B cell (primary cell): ENCODE measurements at regions of chr12 and their contacts with region 1.

Region 1: DNA sequence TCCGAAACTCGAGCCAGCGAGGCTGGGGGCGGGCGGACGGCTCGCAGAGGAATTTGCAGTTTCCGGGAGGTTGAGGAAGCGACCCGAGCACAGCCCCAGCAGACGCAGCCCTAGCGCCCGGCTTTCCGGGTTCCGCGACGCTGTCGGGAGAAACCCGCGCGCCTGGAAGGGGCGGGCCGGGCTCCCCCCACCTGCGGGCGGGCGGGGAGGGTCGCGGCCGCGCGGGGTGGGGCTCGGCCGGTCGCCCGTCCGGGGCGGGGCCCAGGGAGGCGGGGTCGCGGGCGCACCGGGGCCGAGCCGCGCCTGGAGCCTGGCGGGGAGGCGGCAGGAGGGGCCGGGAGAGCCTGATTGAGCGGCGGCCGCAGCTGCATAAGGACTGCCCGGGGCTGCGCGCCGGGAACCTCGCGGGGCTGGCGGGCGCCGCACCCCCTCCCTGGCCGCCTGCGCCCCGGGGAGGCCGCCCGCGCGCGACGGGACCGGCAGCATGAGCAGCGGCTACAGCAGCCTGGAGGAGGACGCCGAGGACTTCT is at the start of gene RASSF3:
- DNase-seq: peak; percentile 83
- ATAC-seq: peak; percentile 63
- H3K4me3 ChIP-seq: peak within 1 kb of the TSS; percentile 85 to 98 (median 94)
- H3K4me3 Mint-ChIP-seq: peak within 1 kb of the TSS; percentile 99
- H3K27ac ChIP-seq: peak within 1 kb of the TSS; percentile 83 to 89
- H3K27ac Mint-ChIP-seq: peak within 1 kb of the TSS; percentile 99
- H3K4me1 ChIP-seq: peaks cover 33 to 37% of the 10 kb centered on the region in 2 donors
- H3K4me1 Mint-ChIP-seq: peaks cover 39% of the 10 kb centered on the region
- H3K27me3 ChIP-seq: no peaks in the 10 kb centered on the region
- H3K27me3 Mint-ChIP-seq: no peaks in the 10 kb centered on the region
- CTCF ChIP-seq: no peak
- total RNA-seq, gene RASSF3: 104 and 107 TPM in 2 replicates

Region 2: GRCh38 chr12:64222009-64222765 is 388.0 kb before region 1 on chr12 and contains the start of gene KICS2:
- CTCF ChIA-PET with region 1: no interaction called
- POLR2A ChIA-PET with region 1: no interaction called
- intact Hi-C with region 1: loop called (anchors 5 kb)
- DNase-seq: peak; percentile 98
- ATAC-seq: peak; percentile 86
- H3K4me3 ChIP-seq: peak within 1 kb of the TSS; percentile 58 to 89 (median 80)
- H3K4me3 Mint-ChIP-seq: peak within 1 kb of the TSS; percentile 93
- H3K27ac ChIP-seq: peak within 1 kb of the TSS; percentile 92 to 97
- H3K27ac Mint-ChIP-seq: peak within 1 kb of the TSS; percentile 96
- H3K4me1 ChIP-seq: peaks cover 10 to 20% of the 10 kb centered on the region in 2 donors
- H3K4me1 Mint-ChIP-seq: peaks cover 31% of the 10 kb centered on the region
- H3K27me3 ChIP-seq: peaks cover 0 to 3% (median 0%) of the 10 kb centered on the region in 4 experiments
- H3K27me3 Mint-ChIP-seq: peaks cover 8% of the 10 kb centered on the region
- CTCF ChIP-seq: no peak
- total RNA-seq, gene KICS2: 18.7 and 21.2 TPM in 2 replicates

Region 3: GRCh38 chr12:64451687-64452558 is 158.3 kb before region 1 on chr12 and contains the start of gene TBK1:
- CTCF ChIA-PET with region 1: no interaction called
- POLR2A ChIA-PET with region 1: interaction called, 3 read pairs
- intact Hi-C with region 1: loop called (anchors 5 kb)
- DNase-seq: peak; percentile 82
- ATAC-seq: peak; percentile 79
- H3K4me3 ChIP-seq: peak within 1 kb of the TSS; percentile 66 to 97 (median 90)
- H3K4me3 Mint-ChIP-seq: peak within 1 kb of the TSS; percentile 96
- H3K27ac ChIP-seq: peak within 1 kb of the TSS; percentile 63 to 77
- H3K27ac Mint-ChIP-seq: peak within 1 kb of the TSS; percentile 92
- H3K4me1 ChIP-seq: peaks cover 5 to 12% of the 10 kb centered on the region in 2 donors
- H3K4me1 Mint-ChIP-seq: peaks cover 38% of the 10 kb centered on the region
- H3K27me3 ChIP-seq: no peaks in the 10 kb centered on the region
- H3K27me3 Mint-ChIP-seq: no peaks in the 10 kb centered on the region
- CTCF ChIP-seq: peak; percentile 38
- total RNA-seq, gene TBK1: 38.5 and 46.9 TPM in 2 replicates

Region 4: GRCh38 chr12:64625243-64626077 is 15.2 kb after region 1 on chr12:
- CTCF ChIA-PET with region 1: interaction called, 8 read pairs
- POLR2A ChIA-PET with region 1: interaction called, 27 read pairs
- intact Hi-C with region 1: loop called (anchors 2 kb)
- DNase-seq: peak; percentile 89
- ATAC-seq: peak; percentile 46
- H3K4me3 ChIP-seq: peak overlapping the region; percentile 46 to 81 (median 56)
- H3K4me3 Mint-ChIP-seq: peak overlapping the region; percentile 90
- H3K27ac ChIP-seq: peak overlapping the region; percentile 89 to 91
- H3K27ac Mint-ChIP-seq: peak overlapping the region; percentile 94
- H3K4me1 ChIP-seq: peaks cover 61 to 80% of the 10 kb centered on the region in 2 donors
- H3K4me1 Mint-ChIP-seq: peaks cover 66% of the 10 kb centered on the region
- H3K27me3 ChIP-seq: no peaks in the 10 kb centered on the region
- H3K27me3 Mint-ChIP-seq: no peaks in the 10 kb centered on the region
- CTCF ChIP-seq: no peak

Region 5: DNA sequence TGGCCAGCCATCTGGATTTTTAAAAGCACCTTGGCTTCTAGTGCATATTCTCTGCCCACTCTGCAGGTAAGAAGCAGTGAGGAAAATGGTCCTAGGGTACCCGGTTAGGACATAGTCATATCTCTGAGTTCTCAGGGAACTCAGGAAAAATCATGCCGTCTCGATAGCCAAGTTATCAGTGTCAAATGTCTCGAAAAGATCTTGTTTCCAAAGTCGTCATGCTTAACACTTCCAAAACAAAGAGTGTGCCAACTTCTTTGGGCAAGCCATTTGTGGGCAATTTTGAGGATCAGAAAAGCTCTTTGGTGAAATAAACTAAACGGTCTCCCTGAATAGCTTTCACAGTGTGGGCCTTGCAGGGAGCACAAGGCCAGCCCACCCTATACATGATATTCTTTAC is 39.3 kb after region 1 on chr12:
- CTCF ChIA-PET with region 1: no interaction called
- POLR2A ChIA-PET with region 1: no interaction called
- intact Hi-C with region 1: loop called (anchors 5 kb)
- DNase-seq: no peak
- ATAC-seq: no peak
- H3K4me3 ChIP-seq: no peak overlapping the region
- H3K4me3 Mint-ChIP-seq: no peak overlapping the region
- H3K27ac ChIP-seq: peak overlapping the region in 1 of 2 donors; percentile 47
- H3K27ac Mint-ChIP-seq: no peak overlapping the region
- H3K4me1 ChIP-seq: peaks cover 23 to 50% of the 10 kb centered on the region in 2 donors
- H3K4me1 Mint-ChIP-seq: peaks cover 69% of the 10 kb centered on the region
- H3K27me3 ChIP-seq: no peaks in the 10 kb centered on the region
- H3K27me3 Mint-ChIP-seq: no peaks in the 10 kb centered on the region
- CTCF ChIP-seq: no peak

Region 6: DNA sequence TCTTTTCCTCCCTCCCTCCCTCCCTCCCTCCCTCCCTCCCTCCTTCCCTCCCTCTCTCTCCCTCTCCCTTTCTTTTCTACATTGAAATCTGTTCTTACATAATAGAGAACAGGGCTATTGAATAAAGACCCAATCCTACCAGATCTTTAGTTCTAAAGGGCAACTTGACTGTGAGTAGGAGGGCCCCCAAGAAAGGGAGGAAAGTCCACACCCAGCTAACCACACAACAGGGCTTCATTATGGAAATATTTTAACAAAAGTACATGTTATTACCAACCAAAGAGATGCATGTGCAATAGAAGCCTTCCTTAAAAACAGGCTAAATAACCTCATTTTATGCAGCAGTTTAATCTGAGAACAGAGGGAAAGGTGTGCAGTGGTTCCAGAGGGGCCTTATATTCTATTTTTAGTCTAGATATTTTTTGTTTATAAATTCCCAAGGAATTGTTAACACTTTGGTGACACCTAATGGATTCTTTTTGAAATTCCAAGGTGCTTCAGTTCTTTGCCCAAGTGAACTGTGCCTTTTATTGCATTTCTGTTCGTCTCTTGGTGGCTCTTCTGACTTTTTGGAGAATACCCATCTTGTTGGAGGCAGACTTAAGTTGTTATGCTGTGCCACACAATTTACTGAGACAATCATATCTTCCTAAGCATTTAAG is 86.0 kb after region 1 on chr12:
- CTCF ChIA-PET with region 1: interaction called, 70 read pairs
- POLR2A ChIA-PET with region 1: interaction called, 5 read pairs
- intact Hi-C with region 1: loop called (anchors 1 kb)
- DNase-seq: no peak
- ATAC-seq: no peak
- H3K4me3 ChIP-seq: no peak overlapping the region
- H3K4me3 Mint-ChIP-seq: no peak overlapping the region
- H3K27ac ChIP-seq: peak overlapping the region in 1 of 2 donors; percentile 46
- H3K27ac Mint-ChIP-seq: no peak overlapping the region
- H3K4me1 ChIP-seq: peaks cover 6 to 13% of the 10 kb centered on the region in 2 donors
- H3K4me1 Mint-ChIP-seq: peaks cover 28% of the 10 kb centered on the region
- H3K27me3 ChIP-seq: no peaks in the 10 kb centered on the region
- H3K27me3 Mint-ChIP-seq: no peaks in the 10 kb centered on the region
- CTCF ChIP-seq: no peak

Region 7: DNA sequence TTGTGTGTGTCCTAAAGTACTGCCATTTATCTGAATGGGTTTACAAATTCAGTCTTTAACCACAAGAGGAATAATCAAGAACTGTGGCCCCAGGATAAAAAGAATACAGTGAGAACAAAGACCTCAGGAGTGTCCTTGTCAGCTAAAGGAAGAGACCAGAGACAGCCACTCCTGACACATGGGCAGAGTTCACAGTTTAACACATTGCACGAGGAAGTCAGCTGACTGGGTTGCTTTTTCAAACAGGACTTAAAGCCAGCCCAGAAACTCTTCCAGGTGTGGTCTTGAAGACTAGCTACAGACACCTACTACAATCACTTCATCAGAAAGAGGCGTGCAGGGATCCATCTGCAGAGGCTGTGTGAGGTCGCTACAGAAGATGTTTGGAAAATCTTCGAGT is 106.2 kb after region 1 on chr12:
- CTCF ChIA-PET with region 1: no interaction called
- POLR2A ChIA-PET with region 1: no interaction called
- intact Hi-C with region 1: no loop called
- DNase-seq: no peak
- ATAC-seq: no peak
- H3K4me3 ChIP-seq: no peak overlapping the region
- H3K4me3 Mint-ChIP-seq: no peak overlapping the region
- H3K27ac ChIP-seq: no peak overlapping the region
- H3K27ac Mint-ChIP-seq: no peak overlapping the region
- H3K4me1 ChIP-seq: no peaks in the 10 kb centered on the region
- H3K4me1 Mint-ChIP-seq: no peaks in the 10 kb centered on the region
- H3K27me3 ChIP-seq: no peaks in the 10 kb centered on the region
- H3K27me3 Mint-ChIP-seq: no peaks in the 10 kb centered on the region
- CTCF ChIP-seq: no peak